ENCODE measurements at regions of chr5 and their contacts with region 1.

Region 1: DNA sequence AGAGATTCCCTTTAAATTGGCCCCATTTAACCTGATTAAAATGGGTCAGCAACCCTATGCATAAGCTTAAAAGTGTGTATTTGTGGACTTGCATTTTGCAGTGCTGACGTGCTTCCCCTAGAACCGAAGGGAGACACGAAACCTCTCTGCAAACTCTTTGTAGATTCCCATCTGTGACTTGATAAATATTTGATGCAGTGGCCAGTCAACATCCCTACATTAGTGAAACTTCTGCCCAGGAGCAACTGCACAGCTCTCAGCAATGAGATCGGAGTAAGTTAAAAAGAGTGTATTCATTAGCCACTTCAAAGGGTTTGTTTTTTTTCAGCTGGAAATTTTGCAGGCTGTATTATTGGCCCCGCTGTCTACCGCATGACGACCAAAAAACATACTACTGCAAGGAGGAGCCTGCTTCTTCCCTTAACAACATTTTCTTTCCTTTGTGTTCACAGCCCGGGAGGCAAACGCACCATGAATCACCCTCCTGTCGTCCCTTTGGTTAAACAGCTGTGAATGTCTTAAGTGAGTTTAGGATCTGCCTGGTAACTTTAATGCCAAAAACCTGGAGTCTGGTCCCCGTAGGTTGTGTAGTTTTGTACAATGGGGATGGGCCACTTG is 38.0 kb upstream of the TCERG1 start:
- DNase-seq: no peak
- H3K4me3 ChIP-seq: no peak overlapping the region
- H3K27ac ChIP-seq: no peak overlapping the region
- H3K4me1 ChIP-seq: no peaks in the 10 kb centered on the region
- H3K27me3 ChIP-seq: peaks cover 3% of the 10 kb centered on the region
- CTCF ChIP-seq: no peak
- EP300 ChIP-seq: no peak
- POLR2A ChIP-seq: no peak

Region 2: DNA sequence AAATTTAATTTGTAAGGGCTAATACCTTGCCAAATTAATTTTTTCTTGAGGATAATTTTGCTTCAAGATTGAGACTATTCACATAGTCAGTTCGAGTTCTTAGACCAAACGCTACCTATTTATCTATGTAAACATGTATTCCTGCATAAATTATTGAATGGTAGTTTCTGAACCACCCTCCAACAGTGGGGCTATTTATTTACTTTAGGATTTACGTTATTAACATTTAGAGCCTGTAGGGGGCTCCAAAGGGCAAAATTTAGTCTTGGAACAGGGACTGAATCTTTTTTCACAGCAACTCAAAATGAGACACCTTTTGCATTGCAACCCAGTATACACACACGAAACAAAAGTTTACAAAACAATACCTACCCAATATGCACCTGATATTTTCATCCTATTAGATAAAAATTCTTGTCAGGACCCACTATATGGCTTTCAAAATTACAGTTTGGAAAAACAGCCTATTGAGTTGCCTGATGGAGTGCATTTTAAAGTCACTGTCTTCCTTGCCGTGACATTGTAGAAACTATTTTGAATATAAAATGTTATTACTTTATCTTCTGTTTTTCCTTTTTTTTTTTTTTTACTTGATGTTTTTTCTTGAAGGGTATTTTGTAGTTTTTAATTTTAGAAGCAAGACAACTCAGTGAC is 117.6 kb before region 1 on chr5:
- in situ Hi-C with region 1: loop called in 1 of 4 experiments (anchors 10 kb)
- intact Hi-C with region 1: no loop called
- DNase-seq: no peak
- H3K4me3 ChIP-seq: no peak overlapping the region
- H3K27ac ChIP-seq: no peak overlapping the region
- H3K4me1 ChIP-seq: no peaks in the 10 kb centered on the region
- H3K27me3 ChIP-seq: no peaks in the 10 kb centered on the region
- CTCF ChIP-seq: peak; percentile 19 to 48 (median 41)
- EP300 ChIP-seq: no peak
- POLR2A ChIP-seq: no peak

Region 3: DNA sequence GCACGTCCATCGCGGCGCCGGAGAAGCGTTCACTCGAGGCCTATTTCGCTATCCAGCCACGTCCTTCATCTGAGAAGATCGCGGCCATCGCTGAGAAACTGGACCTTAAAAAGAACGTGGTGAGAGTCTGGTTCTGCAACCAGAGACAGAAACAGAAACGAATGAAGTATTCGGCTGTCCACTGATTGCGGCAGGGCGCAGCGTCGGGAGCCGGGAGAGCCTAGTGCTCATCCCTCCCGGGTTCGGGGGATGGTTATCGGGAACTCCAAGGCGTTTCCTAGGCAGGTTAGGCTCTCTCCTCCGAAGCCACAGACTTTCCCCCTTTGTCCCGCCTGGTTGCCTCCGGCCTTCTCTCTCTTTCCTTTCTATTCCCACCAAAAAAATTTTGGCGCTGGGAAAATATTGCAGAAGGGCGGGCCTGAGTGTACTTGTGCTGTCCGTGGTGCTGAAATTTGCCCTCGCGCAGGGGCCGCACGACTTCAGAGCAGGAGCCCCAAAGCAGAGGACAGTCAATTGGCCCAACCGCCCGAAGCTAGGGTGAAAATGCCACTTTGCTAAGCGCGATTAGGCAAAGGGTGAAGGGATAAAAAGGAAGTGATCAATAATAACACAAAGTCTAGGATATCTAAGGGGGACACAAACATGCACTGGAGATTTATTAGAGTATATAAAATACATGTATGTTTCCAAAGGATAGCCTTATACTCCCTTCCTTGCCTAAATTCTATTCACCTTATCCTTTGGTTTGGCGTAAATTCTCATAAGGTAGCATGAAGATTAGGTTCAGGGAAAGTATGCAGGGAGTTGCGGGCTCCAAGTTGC is 68.7 kb before region 1 on chr5:
- in situ Hi-C with region 1: no loop called
- intact Hi-C with region 1: no loop called
- DNase-seq: no peak
- H3K4me3 ChIP-seq: peak overlapping the region in 1 of 4 donors; percentile 22
- H3K27ac ChIP-seq: no peak overlapping the region
- H3K4me1 ChIP-seq: peaks cover 0 to 9% (median 6%) of the 10 kb centered on the region in 4 donors
- H3K27me3 ChIP-seq: peaks cover 99% of the 10 kb centered on the region
- CTCF ChIP-seq: no peak
- EP300 ChIP-seq: no peak
- POLR2A ChIP-seq: no peak

Region 4: GRCh38 chr5:146363161-146363874 is 45.8 kb before region 1 on chr5:
- in situ Hi-C with region 1: no loop called
- intact Hi-C with region 1: no loop called
- DNase-seq: no peak
- H3K4me3 ChIP-seq: no peak overlapping the region
- H3K27ac ChIP-seq: no peak overlapping the region
- H3K4me1 ChIP-seq: no peaks in the 10 kb centered on the region
- H3K27me3 ChIP-seq: no peaks in the 10 kb centered on the region
- CTCF ChIP-seq: no peak
- EP300 ChIP-seq: no peak
- POLR2A ChIP-seq: no peak

Region 5: DNA sequence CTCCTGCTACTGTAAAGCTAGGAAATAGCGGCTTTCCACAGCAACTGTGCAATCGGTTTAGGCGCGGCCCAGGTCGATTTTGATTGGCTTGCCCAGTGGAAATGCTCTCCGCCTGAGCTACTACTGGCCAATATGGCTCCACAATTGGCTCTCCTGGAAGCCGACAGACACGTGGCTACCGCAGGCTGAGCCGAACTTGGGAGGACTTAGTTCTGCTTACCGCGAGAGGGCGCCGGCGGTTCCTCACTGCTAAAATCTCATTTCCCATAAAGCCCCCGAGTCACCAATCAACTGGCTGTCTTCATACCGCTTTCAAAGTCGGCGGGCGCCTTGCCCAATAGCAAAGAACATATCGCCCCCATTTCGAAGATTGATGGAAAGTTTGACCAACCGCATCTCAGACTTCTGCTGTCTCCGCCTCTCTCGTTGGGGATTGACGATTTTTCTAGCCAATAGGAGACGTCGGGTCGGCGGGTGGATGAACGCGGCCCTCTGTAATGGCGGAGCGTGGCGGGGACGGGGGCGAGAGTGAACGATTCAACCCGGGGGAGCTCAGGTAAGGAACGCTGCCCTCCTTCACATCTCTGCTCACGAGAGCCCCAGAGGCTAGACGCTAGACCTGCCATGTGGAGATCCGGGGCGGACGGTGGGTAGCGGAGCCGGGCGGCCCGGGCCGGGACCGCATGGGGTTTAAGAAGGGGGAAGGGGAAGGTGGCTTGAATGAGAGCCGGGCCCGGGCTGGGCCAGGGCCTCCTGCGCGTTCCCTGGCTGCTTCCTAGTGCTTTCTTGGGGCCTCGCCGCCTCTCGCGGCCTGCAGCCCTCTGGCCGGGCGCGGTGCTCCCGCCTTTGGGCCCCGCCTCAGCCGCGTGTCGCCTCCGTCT is 37.9 kb after region 1 on chr5 and contains the start of gene TCERG1:
- in situ Hi-C with region 1: no loop called
- intact Hi-C with region 1: no loop called
- DNase-seq: peak; percentile 99
- H3K4me3 ChIP-seq: peak within 1 kb of the TSS; percentile 92 to 97 (median 96)
- H3K27ac ChIP-seq: peak within 1 kb of the TSS; percentile 88 to 96 (median 94)
- H3K4me1 ChIP-seq: peaks cover 19 to 47% (median 32%) of the 10 kb centered on the region in 4 donors
- H3K27me3 ChIP-seq: no peaks in the 10 kb centered on the region
- CTCF ChIP-seq: peak; percentile 61 to 86 (median 78)
- EP300 ChIP-seq: no peak
- POLR2A ChIP-seq: peak; percentile 60
- total RNA-seq, gene TCERG1: 63.9 to 117 (median 109) TPM

Region 6: GRCh38 chr5:146533260-146533857 is 124.2 kb after region 1 on chr5:
- in situ Hi-C with region 1: no loop called
- intact Hi-C with region 1: no loop called
- DNase-seq: peak; percentile 73
- H3K4me3 ChIP-seq: no peak overlapping the region
- H3K27ac ChIP-seq: no peak overlapping the region
- H3K4me1 ChIP-seq: no peaks in the 10 kb centered on the region
- H3K27me3 ChIP-seq: no peaks in the 10 kb centered on the region
- CTCF ChIP-seq: peak; percentile 61 to 76 (median 71)
- EP300 ChIP-seq: no peak
- POLR2A ChIP-seq: no peak

Measured in transverse colon (tissue), 4 donors.